ENCODE measurements at regions of chr4 and their contacts with region 1.

Region 1: DNA sequence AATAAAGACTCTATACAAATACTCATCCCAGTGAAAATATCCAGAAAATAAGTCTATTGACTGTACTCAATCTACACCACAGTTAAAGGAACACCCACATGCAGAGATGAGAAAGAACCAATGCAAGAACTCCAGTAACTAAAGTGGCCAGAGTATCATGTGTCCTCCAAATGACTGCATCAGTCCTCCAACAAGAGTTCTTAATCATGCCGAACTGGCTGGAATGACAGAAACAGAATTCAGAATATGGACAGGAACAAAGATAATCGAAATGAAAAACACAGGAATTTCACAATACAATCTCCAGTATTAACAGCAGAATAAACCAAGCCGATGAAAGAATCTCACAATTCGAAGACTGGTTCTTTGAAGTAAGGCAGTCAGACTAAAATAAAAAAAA is 210.3 kb downstream of the TBCK start:
- DNase-seq: no peak
- ATAC-seq: no peak
- H3K4me3 ChIP-seq: no peak overlapping the region
- H3K27ac ChIP-seq: no peak overlapping the region
- H3K4me1 ChIP-seq: no peaks in the 10 kb centered on the region
- H3K27me3 ChIP-seq: no peaks in the 10 kb centered on the region
- CTCF ChIP-seq: no peak

Region 2: GRCh38 chr4:106065018-106065417 is 40.7 kb before region 1 on chr4:
- intact Hi-C with region 1: loop called in 1 of 2 experiments (anchors 1 kb)
- DNase-seq: no peak
- ATAC-seq: no peak
- H3K4me3 ChIP-seq: no peak overlapping the region
- H3K27ac ChIP-seq: no peak overlapping the region
- H3K4me1 ChIP-seq: no peaks in the 10 kb centered on the region
- H3K27me3 ChIP-seq: no peaks in the 10 kb centered on the region
- CTCF ChIP-seq: no peak

Measured in psoas muscle (tissue), 8 donors.